Right ventricle myocardium superior (tissue), 1 donor: ENCODE measurements at regions of chr18 and their contacts with region 1.

Region 1: DNA sequence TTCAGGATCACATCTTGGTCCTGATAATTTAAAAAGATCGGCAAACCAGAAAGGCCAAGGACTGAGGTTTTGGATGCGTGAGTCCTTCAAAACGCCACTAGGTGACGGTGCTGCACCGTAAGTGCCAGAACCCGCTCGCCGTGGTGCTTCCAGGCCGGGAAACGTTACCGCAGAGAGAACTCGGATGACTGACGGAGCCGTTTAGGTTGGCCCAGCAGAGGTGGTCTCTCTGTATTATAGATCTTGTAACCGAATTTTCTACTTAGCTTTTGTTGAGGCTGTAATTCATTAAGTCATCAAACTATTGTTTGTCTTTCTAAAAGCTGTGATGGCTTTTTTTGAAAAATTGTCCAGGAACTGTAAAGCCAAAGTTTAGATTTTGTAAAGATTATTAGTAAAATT is 39.8 kb upstream of the ADCYAP1 start:
- DNase-seq: peak; percentile 76
- ATAC-seq: peak; percentile 85

Region 2: DNA sequence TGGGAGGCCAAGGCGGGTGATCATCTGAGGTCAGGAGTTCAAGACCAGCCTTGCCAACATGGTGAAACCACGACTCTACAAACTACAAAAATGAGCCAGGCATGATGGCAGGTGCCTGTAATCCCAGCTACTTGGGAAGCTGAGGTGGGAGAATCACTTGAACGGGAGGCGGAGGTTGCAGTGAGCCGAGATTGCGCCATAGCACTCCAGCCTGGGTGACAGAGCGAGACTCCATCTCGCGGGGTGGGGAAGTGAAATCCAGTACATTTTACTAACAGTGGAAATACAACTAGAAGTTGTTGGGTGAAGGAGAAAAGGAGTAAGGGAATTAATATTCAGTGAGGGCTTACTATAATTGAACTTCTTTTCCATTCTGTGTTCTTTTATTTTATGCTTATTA is 139.2 kb before region 1 on chr18:
- intact Hi-C with region 1: no loop called
- DNase-seq: no peak
- ATAC-seq: no peak

Region 3: GRCh38 chr18:961644-962355 is 96.9 kb after region 1 on chr18:
- intact Hi-C with region 1: loop called (anchors 5 kb)
- DNase-seq: no peak
- ATAC-seq: peak; percentile 38

Region 4: GRCh38 chr18:1392046-1392445 is 527.2 kb after region 1 on chr18:
- intact Hi-C with region 1: no loop called
- DNase-seq: no peak
- ATAC-seq: no peak

Region 5: GRCh38 chr18:2547477-2548087 is 1682.7 kb after region 1 on chr18:
- intact Hi-C with region 1: loop called (anchors 10 kb)
- DNase-seq: no peak
- ATAC-seq: peak; percentile 57